ENCODE measurements at regions of chr2 and their contacts with region 1.

Region 1: DNA sequence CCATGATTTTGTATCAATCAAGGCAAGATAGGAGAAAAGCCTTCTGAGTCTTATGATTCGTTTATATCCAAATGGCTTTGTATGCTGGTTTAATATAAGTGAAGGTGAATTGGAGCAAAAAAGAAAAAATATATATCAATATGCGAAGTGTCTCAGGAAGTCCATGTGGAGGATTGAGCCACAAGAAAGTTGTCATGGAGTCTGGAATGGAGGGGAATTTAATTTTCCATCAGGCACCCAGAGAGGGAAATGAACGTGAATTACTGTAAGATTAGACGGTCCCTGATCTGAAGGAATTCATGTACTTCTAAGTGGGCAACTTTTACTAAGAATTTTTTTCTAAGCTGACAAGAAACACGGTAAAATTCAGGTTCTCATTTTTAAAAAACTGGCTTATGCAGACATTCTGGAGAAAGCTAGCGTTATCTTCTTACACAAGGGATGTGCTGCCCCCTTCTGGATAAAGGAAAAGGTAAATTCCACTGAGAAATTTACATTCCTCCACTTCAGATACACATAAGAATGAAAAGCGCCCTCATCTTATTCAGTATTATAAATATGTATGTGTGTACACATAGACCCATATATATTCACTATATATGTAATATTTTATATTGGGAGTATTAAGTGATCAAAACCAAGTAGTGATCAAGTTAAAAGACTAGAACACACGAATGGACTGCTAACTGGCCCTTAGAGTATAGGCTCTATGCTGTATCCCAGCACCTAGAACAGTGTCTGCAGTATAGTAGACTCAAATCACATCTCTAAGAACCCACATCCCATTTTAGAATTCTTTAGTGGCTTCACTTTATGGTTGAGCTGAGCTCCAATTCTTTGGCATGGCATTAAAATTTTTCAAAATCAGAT is 289.0 kb upstream of the TFPI start:
- DNase-seq: no peak
- H3K4me3 ChIP-seq: no peak overlapping the region
- H3K27ac ChIP-seq: no peak overlapping the region
- H3K4me1 ChIP-seq: no peaks in the 10 kb centered on the region
- H3K27me3 ChIP-seq: no peaks in the 10 kb centered on the region
- CTCF ChIP-seq: peak in 2 of 3 donors; percentile 27 to 57
- EP300 ChIP-seq: no peak
- POLR2A ChIP-seq: no peak

Region 2: DNA sequence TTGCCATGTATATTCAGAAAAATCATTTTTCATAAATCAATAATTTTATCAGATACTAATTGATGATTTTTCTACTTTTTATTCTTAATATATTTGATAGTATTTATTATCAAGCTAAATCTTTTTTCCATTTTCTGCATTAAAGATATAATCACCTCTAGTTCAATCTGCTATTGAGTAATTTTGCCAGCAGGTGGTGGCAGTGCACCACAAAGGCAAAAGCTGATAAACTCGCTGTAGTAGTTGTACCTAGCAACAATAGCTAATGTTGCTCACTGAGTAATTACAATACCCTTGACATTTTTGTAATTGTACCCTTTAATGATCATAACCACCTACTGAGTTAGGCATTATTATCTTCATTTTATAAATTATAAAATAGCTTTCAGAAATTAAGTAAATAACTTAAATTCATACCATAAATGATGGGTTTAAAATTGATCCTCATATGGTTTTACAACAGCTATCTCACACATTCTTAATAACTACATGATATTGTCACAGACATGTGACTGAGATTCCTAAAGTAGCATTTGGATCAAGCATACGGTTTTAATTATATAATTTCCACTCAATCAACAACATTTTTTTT is 343.2 kb before region 1 on chr2:
- intact Hi-C with region 1: loop called in 1 of 4 experiments (anchors 10 kb)
- DNase-seq: peak; percentile 35 to 70 (median 61)
- H3K4me3 ChIP-seq: no peak overlapping the region
- H3K27ac ChIP-seq: no peak overlapping the region
- H3K4me1 ChIP-seq: no peaks in the 10 kb centered on the region
- H3K27me3 ChIP-seq: no peaks in the 10 kb centered on the region
- CTCF ChIP-seq: peak; percentile 59 to 88 (median 84)
- EP300 ChIP-seq: no peak
- POLR2A ChIP-seq: no peak

Region 3: DNA sequence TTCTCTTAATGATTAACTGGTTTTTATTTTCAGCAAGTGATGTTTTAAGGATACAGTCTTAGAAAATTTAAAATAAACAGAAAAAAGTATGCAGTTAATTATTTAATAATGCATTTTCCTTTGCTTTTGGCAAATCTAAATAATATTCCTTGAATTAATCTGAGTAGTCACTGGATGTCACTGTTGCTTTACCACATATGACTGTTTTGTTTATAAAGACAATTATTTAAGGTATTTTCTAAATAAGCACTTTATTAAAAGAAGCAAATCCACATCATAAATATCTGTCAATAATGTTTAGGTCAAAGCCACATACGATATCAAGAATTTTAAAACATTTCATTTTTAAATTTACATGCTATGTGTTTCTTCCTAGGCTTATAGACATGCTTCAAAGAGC is 248.4 kb before region 1 on chr2:
- intact Hi-C with region 1: loop called in 1 of 4 experiments (anchors 10 kb)
- DNase-seq: no peak
- H3K4me3 ChIP-seq: no peak overlapping the region
- H3K27ac ChIP-seq: no peak overlapping the region
- H3K4me1 ChIP-seq: no peaks in the 10 kb centered on the region
- H3K27me3 ChIP-seq: no peaks in the 10 kb centered on the region
- CTCF ChIP-seq: no peak
- EP300 ChIP-seq: no peak
- POLR2A ChIP-seq: no peak

Measured in ovary (tissue), 10 donors.